ENCODE measurements at regions of chr2 and their contacts with region 1.

Region 1: DNA sequence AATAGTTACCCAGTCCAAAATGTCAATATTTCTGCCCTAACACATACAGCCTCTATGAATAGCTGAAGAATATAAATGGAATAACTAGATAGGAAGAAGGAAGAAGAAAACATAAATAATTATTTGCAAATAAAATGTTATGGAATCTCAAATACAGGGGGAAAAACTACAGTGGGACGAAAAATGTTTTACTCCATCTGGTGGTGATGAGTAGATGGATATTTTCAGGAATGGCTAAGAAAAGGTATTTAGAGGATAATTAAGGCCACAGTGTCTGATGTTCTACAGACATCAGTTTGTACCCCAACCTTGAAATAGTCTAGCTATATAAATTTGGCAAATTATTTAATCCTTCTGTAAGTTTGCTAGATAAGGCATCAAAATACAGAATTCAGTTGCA is 178.1 kb upstream of the FSHR start:
- DNase-seq: no peak
- ATAC-seq: no peak
- H3K4me3 ChIP-seq: no peak overlapping the region
- H3K27ac ChIP-seq: no peak overlapping the region
- H3K4me1 ChIP-seq: no peaks in the 10 kb centered on the region
- H3K27me3 ChIP-seq: no peaks in the 10 kb centered on the region

Region 2: DNA sequence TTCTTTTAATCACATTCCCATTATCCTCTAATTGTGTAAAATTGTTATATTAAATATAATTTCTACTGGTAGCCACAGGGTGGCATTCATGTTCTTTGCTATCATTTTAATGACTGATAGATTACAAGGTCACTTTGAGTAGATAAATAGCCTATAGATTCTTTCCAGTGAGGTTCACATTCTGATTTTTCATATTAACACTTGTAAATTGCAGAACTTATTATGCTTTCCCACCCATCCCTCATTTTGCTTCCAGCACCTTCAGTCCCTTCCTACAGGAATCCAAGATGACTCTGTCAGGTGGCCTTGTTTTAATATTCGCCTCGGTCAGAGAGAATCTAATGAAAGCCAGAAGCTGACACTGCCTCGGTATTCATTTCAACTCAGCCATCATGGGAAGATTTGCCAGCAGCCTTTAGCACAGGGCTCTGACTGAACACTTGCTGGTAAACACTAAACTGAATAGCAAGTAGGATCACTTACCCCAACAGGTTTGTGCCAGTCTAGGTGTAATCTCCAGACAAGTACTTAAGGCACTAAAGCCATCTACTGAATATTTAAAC is 76.9 kb before region 1 on chr2:
- intact Hi-C with region 1: loop called in 2 of 4 experiments (anchors 5 kb)
- DNase-seq: no peak
- ATAC-seq: no peak
- H3K4me3 ChIP-seq: no peak overlapping the region
- H3K27ac ChIP-seq: no peak overlapping the region
- H3K4me1 ChIP-seq: no peaks in the 10 kb centered on the region
- H3K27me3 ChIP-seq: no peaks in the 10 kb centered on the region

Region 3: DNA sequence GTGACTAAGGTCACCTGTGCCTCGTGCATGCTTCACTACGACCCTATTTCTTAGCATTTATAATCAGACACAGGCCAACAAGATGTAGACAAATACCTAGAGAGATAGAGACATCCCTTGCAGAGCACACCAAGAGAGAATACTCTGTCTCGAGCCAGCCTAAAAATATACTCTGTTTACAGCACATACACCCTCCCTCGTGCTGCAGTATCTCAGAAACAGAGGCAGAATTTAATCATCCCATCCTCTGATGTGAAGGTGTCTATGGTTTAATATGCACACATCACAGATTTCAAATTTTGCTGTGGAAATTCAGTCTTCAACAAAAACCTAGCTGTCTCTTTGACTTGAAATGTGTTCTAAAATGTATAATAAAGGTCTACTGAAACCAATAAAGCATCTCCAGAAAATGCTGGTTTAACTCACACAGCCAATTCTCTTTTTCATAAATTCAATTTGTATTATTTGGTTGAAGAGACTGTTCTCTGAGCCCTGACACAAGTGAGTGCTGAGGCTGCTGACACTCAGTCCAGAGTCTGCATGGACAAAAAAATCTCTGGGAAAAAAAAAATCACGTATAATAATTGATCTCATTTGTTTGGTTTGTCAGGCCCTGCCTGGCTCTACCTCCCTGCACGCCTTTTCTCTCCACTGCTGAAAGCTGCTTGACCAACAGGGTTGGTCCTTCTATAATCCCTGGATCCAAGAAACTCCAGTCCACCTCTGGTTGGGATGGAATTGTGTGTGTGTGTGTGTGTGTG is 36.1 kb before region 1 on chr2:
- intact Hi-C with region 1: no loop called
- DNase-seq: no peak
- ATAC-seq: peak in 1 of 2 donors; percentile 71
- H3K4me3 ChIP-seq: no peak overlapping the region
- H3K27ac ChIP-seq: peak overlapping the region; percentile 67
- H3K4me1 ChIP-seq: no peaks in the 10 kb centered on the region
- H3K27me3 ChIP-seq: no peaks in the 10 kb centered on the region